Cardiac septum (tissue), 1 donor: ENCODE measurements at regions of chr14 and their contacts with region 1.

Region 1: DNA sequence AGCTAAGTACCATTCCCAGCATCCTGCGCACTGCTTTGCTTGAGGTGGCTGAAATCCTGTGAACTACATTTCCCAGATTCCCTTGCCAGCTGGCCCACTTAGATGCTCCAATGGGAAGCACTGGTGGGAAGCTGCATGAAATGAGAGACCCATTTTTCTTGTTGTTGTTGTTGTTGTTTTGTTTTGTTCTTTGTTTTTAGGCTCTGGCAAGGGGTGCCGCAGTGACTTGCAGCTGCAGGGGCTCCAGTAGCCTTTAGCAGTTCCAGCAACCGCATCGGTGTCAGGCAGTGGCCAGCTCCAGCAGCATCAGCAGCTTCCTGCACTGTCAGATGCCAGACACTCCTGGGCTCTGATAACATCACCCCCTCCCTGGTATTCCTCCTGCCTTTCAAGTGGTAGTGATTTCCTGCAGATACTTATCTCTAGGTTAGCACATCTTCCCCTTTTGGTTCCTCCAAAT is 8.8 kb upstream of the EGLN3 start:
- DNase-seq: no peak

Region 2: DNA sequence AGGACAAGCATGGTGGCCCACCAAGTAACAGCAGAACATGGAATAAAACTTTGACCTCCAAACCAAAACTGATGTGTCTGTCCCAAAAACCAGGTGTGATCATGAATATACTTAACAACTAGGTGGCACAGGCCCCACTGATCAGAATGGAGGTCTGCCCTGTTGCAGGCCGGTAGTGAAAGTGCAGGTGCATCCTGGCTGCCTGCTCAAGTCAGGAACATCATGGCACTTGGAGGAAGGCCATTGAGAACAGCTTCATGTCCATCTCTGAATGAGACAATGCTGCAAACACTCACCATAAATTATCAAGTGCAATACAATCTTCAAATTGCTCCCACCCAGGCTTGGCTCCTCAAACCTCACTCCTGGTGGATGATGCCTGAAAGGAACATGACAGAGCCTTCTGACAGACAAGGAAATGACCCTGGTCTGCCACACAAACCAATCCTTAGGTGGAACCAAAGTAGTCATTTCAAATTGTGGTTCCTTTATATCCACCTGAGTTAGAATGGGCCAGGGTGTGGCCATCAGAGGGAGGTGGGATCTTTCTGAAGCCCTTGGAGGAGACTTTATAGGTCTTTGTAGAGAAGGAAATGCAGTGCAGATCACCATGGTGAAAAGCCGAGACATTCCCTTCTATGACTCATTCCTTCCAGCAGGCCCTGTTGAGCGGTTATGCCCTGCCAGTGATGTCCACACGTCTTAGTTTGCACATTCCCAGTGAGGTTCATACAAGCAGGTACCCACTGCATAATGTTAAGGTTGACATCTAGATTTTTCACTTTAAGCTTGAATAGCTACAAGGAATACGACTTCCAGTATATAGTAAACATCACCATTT is 44.8 kb before region 1 on chr14:
- intact Hi-C with region 1: no loop called
- DNase-seq: no peak

Region 3: GRCh38 chr14:33938131-33938949 is 21.4 kb before region 1 on chr14:
- intact Hi-C with region 1: no loop called
- DNase-seq: peak; percentile 88

Region 4: DNA sequence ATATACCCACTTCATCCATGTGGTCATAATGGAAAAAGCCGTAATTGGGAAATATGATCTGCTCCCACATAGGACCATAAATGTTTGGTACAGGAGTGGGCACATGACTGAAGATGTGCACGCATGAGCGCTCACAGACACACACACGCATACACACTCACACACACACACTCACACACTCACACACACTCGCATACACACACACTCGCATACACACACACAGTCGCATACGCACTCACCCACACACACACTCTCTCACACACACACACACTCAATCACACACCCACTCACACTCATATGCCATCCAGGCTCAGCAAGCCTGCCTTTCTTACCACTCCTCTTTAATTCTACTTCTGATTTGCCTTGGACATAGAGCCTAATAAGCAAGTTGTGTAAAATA is 36.7 kb after region 1 on chr14:
- intact Hi-C with region 1: no loop called
- DNase-seq: no peak

Region 5: GRCh38 chr14:34030864-34031263 is 71.1 kb after region 1 on chr14:
- intact Hi-C with region 1: loop called (anchors 5 kb)
- DNase-seq: no peak